ENCODE measurements at regions of chr11 and their contacts with region 1.

Region 1: GRCh38 chr11:63838678-63839507 is at the start of gene MARK2:
- DNase-seq: peak; percentile 77
- ATAC-seq: peak; percentile 88
- H3K4me3 ChIP-seq: peak within 1 kb of the TSS; percentile 99
- H3K27ac ChIP-seq: peak within 1 kb of the TSS; percentile 82
- H3K4me1 ChIP-seq: peaks cover 22% of the 10 kb centered on the region
- H3K27me3 ChIP-seq: no peaks in the 10 kb centered on the region
- CTCF ChIP-seq: no peak
- EP300 ChIP-seq: no peak
- POLR2A ChIP-seq: peak; percentile 75
- RAD21 ChIP-seq: no peak
- polyA plus RNA-seq, gene MARK2: 0.19 to 0.40 TPM

Region 2: GRCh38 chr11:63768237-63769043 is 70.5 kb before region 1 on chr11 and contains the start of gene ZFTA:
- CTCF ChIA-PET with region 1: interaction called, 5 read pairs
- POLR2A ChIA-PET with region 1: no interaction called
- RAD21 ChIA-PET with region 1: interaction called, 17 read pairs
- SMC1A ChIA-PET with region 1: interaction called, 12 read pairs
- in situ Hi-C with region 1: no loop called
- intact Hi-C with region 1: loop called (anchors 5 kb)
- DNase-seq: no peak
- ATAC-seq: peak; percentile 68
- H3K4me3 ChIP-seq: peak within 1 kb of the TSS; percentile 86
- H3K27ac ChIP-seq: peak within 1 kb of the TSS; percentile 44
- H3K4me1 ChIP-seq: peaks cover 8% of the 10 kb centered on the region; the same call in 1 of the 2 replicates
- H3K27me3 ChIP-seq: peaks cover 3 to 4% of the 10 kb centered on the region in 2 experiments
- CTCF ChIP-seq: peak; percentile 54 to 74 (median 65); a peak in 5 of 6 replicates
- EP300 ChIP-seq: no peak
- POLR2A ChIP-seq: peak; percentile 29; the same call in 1 of the 2 replicates
- RAD21 ChIP-seq: peak; percentile 75
- polyA plus RNA-seq, gene ZFTA: 0.39 to 0.99 TPM

Region 3: GRCh38 chr11:63866211-63866610 is 27.3 kb after region 1 on chr11:
- CTCF ChIA-PET with region 1: interaction called, 46 read pairs
- POLR2A ChIA-PET with region 1: interaction called, 4 read pairs
- RAD21 ChIA-PET with region 1: interaction called, 21 read pairs
- SMC1A ChIA-PET with region 1: interaction called, 153 read pairs
- in situ Hi-C with region 1: no loop called
- intact Hi-C with region 1: no loop called
- DNase-seq: peak; percentile 86
- ATAC-seq: peak; percentile 93
- H3K4me3 ChIP-seq: peak overlapping the region; percentile 12; the same call in 1 of the 2 replicates
- H3K27ac ChIP-seq: peak overlapping the region; percentile 26; the same call in 1 of the 2 replicates
- H3K4me1 ChIP-seq: peaks cover 46% of the 10 kb centered on the region
- H3K27me3 ChIP-seq: no peaks in the 10 kb centered on the region
- CTCF ChIP-seq: no peak
- EP300 ChIP-seq: peak in 1 of 2 experiments; percentile 42; a peak in 1 of 4 replicates
- POLR2A ChIP-seq: no peak
- RAD21 ChIP-seq: peak; percentile 13; the same call in 1 of the 2 replicates

Region 4: DNA sequence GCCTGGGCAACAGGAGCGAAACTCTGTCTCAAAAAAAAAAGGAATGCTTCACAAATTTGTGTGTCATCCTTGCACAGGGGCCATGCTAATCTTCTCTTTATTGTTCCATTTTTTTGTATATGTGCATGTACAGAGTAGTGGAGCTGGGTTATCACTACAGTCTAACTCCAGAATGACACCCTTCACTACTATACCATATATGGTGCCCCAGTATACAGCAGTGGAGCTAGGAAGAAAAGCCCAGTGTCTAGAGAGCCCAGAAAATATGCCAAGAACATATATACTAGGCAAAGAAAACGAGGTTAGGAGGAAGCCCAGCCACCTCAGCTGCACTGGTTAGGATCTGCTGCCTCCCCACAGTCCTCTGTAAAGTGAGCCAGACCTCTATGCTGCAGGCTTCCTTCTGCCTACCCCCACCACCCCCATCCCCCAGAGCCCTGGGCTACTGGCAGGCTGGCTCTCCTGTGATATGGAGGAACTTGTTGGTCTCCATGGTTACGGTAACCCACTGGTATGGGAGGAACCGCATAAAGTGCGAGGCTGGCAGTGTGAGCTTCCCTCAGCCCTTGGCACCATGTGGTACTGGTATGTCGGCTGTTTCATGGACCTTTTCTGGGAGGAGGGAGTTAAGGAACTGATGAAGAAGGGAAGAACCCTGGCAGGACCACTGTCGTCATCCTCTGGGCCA is 43.8 kb after region 1 on chr11:
- CTCF ChIA-PET with region 1: interaction called, 13 read pairs
- POLR2A ChIA-PET with region 1: no interaction called
- RAD21 ChIA-PET with region 1: interaction called, 3 read pairs
- SMC1A ChIA-PET with region 1: interaction called, 10 read pairs
- in situ Hi-C with region 1: no loop called
- intact Hi-C with region 1: no loop called
- DNase-seq: no peak
- ATAC-seq: peak; percentile 15; the same call in 1 of the 3 replicates
- H3K4me3 ChIP-seq: no peak overlapping the region
- H3K27ac ChIP-seq: no peak overlapping the region
- H3K4me1 ChIP-seq: peaks cover 20% of the 10 kb centered on the region
- H3K27me3 ChIP-seq: no peaks in the 10 kb centered on the region
- CTCF ChIP-seq: no peak
- EP300 ChIP-seq: no peak
- POLR2A ChIP-seq: no peak
- RAD21 ChIP-seq: no peak

Region 5: GRCh38 chr11:63906585-63906984 is 67.7 kb after region 1 on chr11:
- CTCF ChIA-PET with region 1: interaction called, 25 read pairs
- POLR2A ChIA-PET with region 1: no interaction called
- RAD21 ChIA-PET with region 1: no interaction called
- SMC1A ChIA-PET with region 1: interaction called, 17 read pairs
- in situ Hi-C with region 1: no loop called
- intact Hi-C with region 1: loop called (anchors 1 kb)
- DNase-seq: no peak
- ATAC-seq: peak; percentile 46; the same call in 2 of the 3 replicates
- H3K4me3 ChIP-seq: no peak overlapping the region
- H3K27ac ChIP-seq: no peak overlapping the region
- H3K4me1 ChIP-seq: no peaks in the 10 kb centered on the region
- H3K27me3 ChIP-seq: no peaks in the 10 kb centered on the region
- CTCF ChIP-seq: peak in 2 of 3 experiments; percentile 21 to 33; a peak in 3 of 6 replicates
- EP300 ChIP-seq: no peak
- POLR2A ChIP-seq: no peak
- RAD21 ChIP-seq: no peak

Region 6: GRCh38 chr11:63931045-63931444 is 92.2 kb after region 1 on chr11:
- CTCF ChIA-PET with region 1: interaction called, 14 read pairs
- POLR2A ChIA-PET with region 1: no interaction called
- RAD21 ChIA-PET with region 1: interaction called, 4 read pairs
- SMC1A ChIA-PET with region 1: interaction called, 3 read pairs
- in situ Hi-C with region 1: no loop called
- intact Hi-C with region 1: no loop called
- DNase-seq: no peak
- ATAC-seq: no peak
- H3K4me3 ChIP-seq: no peak overlapping the region
- H3K27ac ChIP-seq: no peak overlapping the region
- H3K4me1 ChIP-seq: no peaks in the 10 kb centered on the region
- H3K27me3 ChIP-seq: no peaks in the 10 kb centered on the region; a peak in 1 of 4 replicates
- CTCF ChIP-seq: no peak
- EP300 ChIP-seq: no peak
- POLR2A ChIP-seq: no peak
- RAD21 ChIP-seq: no peak

Region 7: GRCh38 chr11:63945477-63946163 is 106.7 kb after region 1 on chr11:
- CTCF ChIA-PET with region 1: interaction called, 271 read pairs
- POLR2A ChIA-PET with region 1: interaction called, 8 read pairs
- RAD21 ChIA-PET with region 1: interaction called, 101 read pairs
- SMC1A ChIA-PET with region 1: interaction called, 234 read pairs
- in situ Hi-C with region 1: loop called (anchors 5 kb)
- intact Hi-C with region 1: loop called (anchors 1 kb)
- DNase-seq: no peak
- ATAC-seq: peak; percentile 94
- H3K4me3 ChIP-seq: no peak overlapping the region
- H3K27ac ChIP-seq: no peak overlapping the region
- H3K4me1 ChIP-seq: peaks cover 16% of the 10 kb centered on the region
- H3K27me3 ChIP-seq: no peaks in the 10 kb centered on the region
- CTCF ChIP-seq: peak; percentile 61 to 81 (median 69); a peak in 5 of 6 replicates
- EP300 ChIP-seq: no peak
- POLR2A ChIP-seq: no peak
- RAD21 ChIP-seq: peak; percentile 65

Measured in GM12878 (cell line).